BJ (cell line): ENCODE measurements at regions of chr4 and their contacts with region 1.

Region 1: DNA sequence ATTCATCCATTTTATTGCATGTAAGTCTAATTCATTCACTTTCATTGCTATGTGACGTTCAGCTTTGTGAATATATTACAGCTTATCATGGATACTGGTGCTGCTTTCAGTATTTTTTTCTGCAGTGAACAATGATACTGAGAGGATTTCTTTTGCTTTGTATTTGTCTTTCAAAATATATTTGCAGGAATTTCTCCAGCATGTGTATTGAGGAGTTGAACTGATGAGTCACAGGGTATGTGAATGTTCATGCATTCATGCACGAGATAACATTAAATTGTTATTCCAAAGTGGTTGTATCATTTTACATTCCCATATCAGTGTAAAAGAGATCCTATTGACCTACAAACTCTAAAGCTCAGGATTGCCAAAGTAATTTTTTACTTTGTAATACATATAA is 283.8 kb upstream of the ARSJ start:
- DNase-seq: no peak
- H3K4me3 ChIP-seq: no peak overlapping the region
- H3K27me3 ChIP-seq: no peaks in the 10 kb centered on the region
- CTCF ChIP-seq: no peak

Region 2: DNA sequence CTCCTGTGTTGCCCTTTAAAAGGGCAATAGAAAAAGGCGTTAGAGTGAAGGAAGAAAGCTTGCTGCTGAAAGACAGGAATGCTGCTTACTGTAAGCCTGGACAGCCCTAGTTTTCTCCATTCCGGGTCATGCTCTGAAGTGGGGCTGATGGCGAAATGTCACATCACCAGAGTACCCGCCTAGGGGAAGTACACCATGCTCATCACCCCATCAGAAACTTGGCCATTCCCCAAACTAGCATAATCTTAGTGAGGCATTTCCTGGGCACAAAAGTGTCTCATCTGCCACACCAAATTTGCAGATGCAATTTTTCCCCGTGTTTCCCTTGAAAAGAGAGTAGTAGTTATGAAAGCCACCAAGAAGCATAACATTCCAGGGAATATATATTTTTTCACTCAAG is 453.9 kb before region 1 on chr4:
- CTCF ChIA-PET with region 1: no interaction called
- POLR2A ChIA-PET with region 1: no interaction called
- DNase-seq: no peak
- H3K4me3 ChIP-seq: no peak overlapping the region
- H3K27me3 ChIP-seq: no peaks in the 10 kb centered on the region
- CTCF ChIP-seq: no peak

Region 3: DNA sequence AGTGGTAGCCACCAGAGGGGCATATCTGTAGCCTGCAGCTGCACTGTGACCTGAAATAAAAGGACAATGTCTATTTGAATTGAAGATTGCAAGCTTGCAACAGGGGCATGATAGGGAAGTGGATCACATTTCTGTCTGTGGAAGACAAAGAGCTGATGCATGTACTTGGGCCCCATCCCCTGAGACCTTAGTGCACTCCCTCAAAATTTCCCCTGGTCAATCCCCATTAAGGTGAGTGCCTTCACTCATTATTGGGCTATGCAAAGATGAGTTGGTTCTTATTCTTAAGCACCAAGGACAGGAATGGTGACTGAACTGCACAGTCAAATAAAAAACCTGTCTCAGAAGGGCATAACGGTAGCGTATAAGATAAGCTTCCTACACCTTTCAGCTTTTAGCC is 10.7 kb before region 1 on chr4:
- CTCF ChIA-PET with region 1: interaction called, 11 read pairs
- POLR2A ChIA-PET with region 1: no interaction called
- DNase-seq: no peak
- H3K4me3 ChIP-seq: no peak overlapping the region
- H3K27me3 ChIP-seq: no peaks in the 10 kb centered on the region
- CTCF ChIP-seq: no peak

Region 4: DNA sequence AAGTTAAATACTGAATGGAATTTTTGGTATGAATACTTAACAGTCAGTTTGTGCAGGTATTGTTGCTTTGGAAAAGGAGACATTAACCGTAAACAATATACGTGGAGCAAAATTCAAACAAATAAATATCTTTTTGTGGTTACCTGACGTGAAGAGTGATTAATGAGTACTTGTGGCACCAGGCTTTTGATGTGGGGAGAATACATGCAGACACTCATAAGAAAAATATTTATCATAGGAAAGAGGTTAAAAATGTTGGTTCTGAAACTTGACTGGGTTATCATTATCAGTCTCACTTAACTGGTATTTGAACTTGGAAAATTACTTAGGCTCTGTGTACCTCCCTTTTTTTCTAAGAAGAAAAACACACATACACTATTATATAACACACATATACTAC is 986.6 kb after region 1 on chr4:
- CTCF ChIA-PET with region 1: no interaction called
- POLR2A ChIA-PET with region 1: no interaction called
- DNase-seq: no peak
- H3K4me3 ChIP-seq: no peak overlapping the region
- H3K27me3 ChIP-seq: no peaks in the 10 kb centered on the region
- CTCF ChIP-seq: no peak